GM18951 (cell line): ENCODE measurements at regions of chr22 and their contacts with region 1.

Region 1: GRCh38 chr22:25169278-25170031 is 30.2 kb upstream of the CRYBB3 start:
- POLR2A ChIP-seq: no peak

Region 2: DNA sequence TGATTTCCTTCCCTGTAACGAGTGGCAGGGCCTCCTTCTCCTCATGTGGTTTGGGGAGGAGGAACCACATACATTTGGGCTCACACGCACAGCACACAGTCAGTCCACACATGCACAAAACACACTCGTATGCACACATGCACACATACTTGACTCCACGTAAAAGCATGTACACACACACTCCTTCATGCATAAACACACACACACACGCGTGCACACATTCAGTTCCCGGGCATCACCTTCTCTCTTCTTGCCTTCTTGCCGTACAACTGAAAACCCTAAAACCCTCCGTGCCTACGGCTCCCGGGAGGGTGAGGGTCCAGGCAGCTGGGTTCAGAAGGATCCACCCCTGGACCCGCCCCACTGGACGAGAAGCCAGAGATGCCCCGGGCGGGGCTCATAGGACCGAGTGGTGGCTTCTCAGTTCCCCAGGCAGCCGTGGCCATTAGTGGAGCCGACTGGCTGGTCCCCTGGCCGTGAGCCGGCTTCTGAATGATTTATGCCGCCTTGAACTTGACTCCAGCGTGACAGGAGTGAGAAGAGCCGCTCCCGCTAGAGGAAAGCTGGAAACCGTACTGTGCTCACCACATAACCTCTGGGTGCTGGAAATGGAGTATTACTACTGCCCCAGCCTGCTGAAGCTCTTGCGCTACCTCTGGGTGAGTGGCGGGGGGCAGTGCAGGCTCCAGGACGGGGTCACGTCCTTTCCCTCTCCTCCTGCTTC is 99.5 kb before region 1 on chr22:
- in situ Hi-C with region 1: loop called (anchors 10 kb)
- POLR2A ChIP-seq: no peak

Region 3: GRCh38 chr22:25282671-25283561 is 113.5 kb after region 1 on chr22:
- in situ Hi-C with region 1: no loop called
- POLR2A ChIP-seq: no peak